ENCODE measurements at regions of chr12 and their contacts with region 1.

Region 1: GRCh38 chr12:5745265-5745888 is 199.7 kb downstream of the ANO2 start:
- DNase-seq: peak; percentile 91
- ATAC-seq: peak; percentile 99
- H3K4me3 Mint-ChIP-seq: no peak overlapping the region
- H3K27ac Mint-ChIP-seq: no peak overlapping the region
- H3K4me1 Mint-ChIP-seq: no peaks in the 10 kb centered on the region
- H3K27me3 Mint-ChIP-seq: no peaks in the 10 kb centered on the region
- CTCF ChIP-seq: peak; percentile 96

Region 2: DNA sequence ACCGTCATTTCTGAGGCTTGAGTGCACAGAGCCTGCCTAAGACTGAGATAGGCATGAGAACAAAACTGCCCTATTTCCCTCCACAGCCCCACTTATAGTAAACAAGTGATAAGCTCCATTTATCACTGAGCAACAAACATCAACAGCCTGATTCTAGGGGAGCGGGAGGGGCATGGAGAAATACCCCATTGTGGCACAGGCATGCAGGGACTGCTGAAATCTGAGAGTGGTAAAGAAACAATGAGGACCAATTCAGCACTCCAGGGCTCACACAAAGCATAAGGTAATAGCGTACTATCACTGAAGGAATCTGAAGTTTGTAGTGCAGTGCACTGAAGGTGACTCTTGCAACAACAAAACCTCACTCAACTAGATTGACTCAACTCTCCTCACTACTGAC is 13.0 kb after region 1 on chr12:
- CTCF ChIA-PET with region 1: interaction called, 10 read pairs
- POLR2A ChIA-PET with region 1: no interaction called
- DNase-seq: no peak
- ATAC-seq: peak; percentile 57
- H3K4me3 Mint-ChIP-seq: no peak overlapping the region
- H3K27ac Mint-ChIP-seq: no peak overlapping the region
- H3K4me1 Mint-ChIP-seq: peaks cover 10% of the 10 kb centered on the region
- H3K27me3 Mint-ChIP-seq: no peaks in the 10 kb centered on the region
- CTCF ChIP-seq: no peak

Region 3: DNA sequence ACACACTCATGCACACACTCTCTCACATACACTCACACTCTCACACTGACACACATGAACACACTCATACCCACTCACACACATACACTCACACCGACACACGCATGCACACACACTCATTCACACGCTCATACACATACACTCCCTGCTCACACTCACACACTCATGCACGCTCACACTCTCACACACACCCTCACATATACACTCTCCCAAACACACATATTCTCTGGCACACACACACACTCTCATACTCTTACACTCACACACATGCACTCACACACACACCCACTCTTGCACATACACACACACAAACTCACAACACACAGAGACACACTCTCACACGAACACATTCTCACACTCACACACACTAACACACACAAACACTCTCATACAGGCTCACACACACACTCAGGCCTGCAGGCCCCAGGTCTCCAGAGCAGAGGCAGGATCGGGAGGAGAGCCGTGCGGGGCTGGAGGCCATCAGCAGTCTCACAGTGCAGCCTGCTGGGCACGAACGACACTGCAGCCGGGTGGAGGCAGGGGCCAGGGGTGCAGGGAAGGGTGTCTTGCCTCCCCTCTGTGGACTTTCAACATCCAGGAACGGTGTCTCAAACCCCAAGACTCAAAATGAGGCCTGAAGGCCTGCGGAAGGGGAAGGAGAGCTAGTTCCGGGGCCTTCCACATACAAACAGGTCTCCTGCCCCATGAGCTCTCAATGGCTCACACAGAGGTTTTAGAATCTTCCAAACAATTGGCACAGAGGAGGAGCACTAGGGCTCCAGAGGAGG is 51.0 kb after region 1 on chr12:
- CTCF ChIA-PET with region 1: interaction called, 30 read pairs
- POLR2A ChIA-PET with region 1: no interaction called
- DNase-seq: peak; percentile 85
- ATAC-seq: peak; percentile 100
- H3K4me3 Mint-ChIP-seq: no peak overlapping the region
- H3K27ac Mint-ChIP-seq: no peak overlapping the region
- H3K4me1 Mint-ChIP-seq: no peaks in the 10 kb centered on the region
- H3K27me3 Mint-ChIP-seq: no peaks in the 10 kb centered on the region
- CTCF ChIP-seq: peak; percentile 78

Region 4: DNA sequence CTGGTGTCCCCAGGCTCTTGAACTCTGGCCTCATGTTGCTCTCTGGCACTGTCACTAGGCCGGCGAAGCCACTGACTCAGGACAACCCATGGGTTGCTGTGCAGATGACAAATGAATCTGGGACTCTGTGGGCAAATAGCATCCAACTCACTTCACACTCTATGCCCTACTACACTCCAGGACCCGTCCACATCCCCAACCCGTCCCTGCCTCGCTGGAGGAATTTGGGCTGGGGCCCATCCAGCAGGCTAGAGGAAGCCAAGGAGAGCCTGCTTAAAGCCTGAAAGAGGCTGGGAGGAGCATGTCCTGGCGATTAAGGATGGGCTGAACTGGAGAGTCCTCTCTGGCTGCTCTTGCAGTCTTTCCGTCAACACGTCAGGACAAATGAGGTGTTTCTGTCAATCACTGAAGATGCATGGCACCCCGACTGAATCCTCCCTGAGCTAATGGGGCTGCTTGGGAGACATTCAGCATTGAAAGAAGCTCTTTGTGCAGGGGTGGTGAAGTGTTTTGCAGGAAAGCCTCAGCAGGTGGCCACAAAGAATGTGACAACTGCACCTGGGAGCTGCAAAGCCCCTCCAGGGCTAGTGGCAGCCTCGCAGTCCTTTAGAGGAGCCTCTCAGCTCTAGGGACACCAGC is 128.0 kb after region 1 on chr12:
- CTCF ChIA-PET with region 1: interaction called, 11 read pairs
- POLR2A ChIA-PET with region 1: no interaction called
- DNase-seq: peak; percentile 23
- ATAC-seq: peak; percentile 60
- H3K4me3 Mint-ChIP-seq: no peak overlapping the region
- H3K27ac Mint-ChIP-seq: no peak overlapping the region
- H3K4me1 Mint-ChIP-seq: peaks cover 23% of the 10 kb centered on the region
- H3K27me3 Mint-ChIP-seq: no peaks in the 10 kb centered on the region
- CTCF ChIP-seq: no peak

Region 5: DNA sequence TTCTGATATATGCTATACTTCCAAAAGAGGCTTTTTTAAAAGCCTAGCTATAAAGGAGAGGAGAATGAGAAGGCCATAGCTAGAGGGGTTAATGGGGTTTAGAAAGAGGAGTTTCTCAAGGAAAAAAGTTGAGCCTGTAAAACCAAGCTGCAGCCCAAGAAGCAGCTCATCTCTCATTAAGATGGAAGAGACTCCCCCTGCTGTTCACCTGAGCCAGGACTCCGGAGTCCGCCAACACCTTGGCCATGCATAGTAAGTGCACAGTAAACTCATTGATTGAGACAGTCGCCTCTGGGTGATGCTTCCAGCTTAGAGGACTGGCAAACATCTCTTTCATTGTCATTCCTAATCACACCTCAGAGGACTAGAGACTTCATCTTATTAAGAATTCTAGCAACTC is 153.5 kb after region 1 on chr12:
- CTCF ChIA-PET with region 1: interaction called, 32 read pairs
- POLR2A ChIA-PET with region 1: no interaction called
- DNase-seq: peak; percentile 47
- ATAC-seq: peak; percentile 80
- H3K4me3 Mint-ChIP-seq: no peak overlapping the region
- H3K27ac Mint-ChIP-seq: no peak overlapping the region
- H3K4me1 Mint-ChIP-seq: peaks cover 12% of the 10 kb centered on the region
- H3K27me3 Mint-ChIP-seq: peaks cover 2% of the 10 kb centered on the region; the same call in 1 of the 2 replicates
- CTCF ChIP-seq: no peak

Measured in WTC11 (cell line).